Endothelial cell of umbilical vein (primary cell): ENCODE measurements at regions of chr12 and their contacts with region 1.

Region 1: DNA sequence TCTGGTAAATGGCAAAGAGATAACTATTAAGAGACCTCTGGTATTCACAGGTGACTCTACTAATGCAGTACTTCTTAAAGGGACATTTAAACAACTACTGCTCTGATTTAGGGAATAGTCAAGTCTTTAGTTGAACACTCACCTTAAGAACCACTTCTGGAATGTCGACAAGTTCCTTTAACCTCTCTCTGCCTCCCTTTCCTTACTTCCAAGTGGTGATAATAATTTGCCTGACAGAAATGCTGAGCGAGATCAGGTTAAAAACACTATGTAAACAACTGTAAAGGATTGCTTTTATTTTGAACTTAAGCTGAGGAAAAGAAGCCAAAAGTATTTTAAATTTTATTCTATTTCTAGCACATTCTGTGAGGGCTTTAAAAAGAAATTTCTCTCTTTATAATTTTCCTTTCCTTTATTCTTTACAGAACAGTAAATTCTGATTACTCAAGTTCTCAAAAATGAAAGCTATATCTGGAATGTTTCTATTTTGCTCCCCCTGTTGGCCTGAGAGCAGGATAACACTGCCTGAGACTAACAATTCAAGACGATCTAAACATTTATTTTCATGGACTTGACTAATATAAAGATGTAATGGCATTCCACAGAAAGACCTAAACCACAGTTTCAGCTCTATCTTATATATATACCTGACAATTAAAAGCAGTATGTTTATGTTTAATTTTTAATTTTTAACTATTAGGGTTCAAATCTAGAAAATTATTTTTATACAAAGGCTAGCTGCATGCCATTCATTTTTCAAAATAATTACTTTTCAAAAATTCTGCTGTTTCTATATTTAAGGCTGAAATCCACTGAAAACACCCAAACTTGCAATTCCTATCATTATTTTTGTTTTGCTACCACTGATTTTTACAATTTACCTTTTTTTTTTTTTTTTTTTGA is 29.2 kb downstream of the ZCCHC8 start:
- DNase-seq: peak; percentile 80
- H3K4me3 ChIP-seq: no peak overlapping the region
- H3K27ac ChIP-seq: peak overlapping the region; percentile 35
- H3K4me1 ChIP-seq: peaks cover 3% of the 10 kb centered on the region
- H3K27me3 ChIP-seq: no peaks in the 10 kb centered on the region
- CTCF ChIP-seq: peak; percentile 46 to 62
- POLR2A ChIP-seq: no peak

Region 2: DNA sequence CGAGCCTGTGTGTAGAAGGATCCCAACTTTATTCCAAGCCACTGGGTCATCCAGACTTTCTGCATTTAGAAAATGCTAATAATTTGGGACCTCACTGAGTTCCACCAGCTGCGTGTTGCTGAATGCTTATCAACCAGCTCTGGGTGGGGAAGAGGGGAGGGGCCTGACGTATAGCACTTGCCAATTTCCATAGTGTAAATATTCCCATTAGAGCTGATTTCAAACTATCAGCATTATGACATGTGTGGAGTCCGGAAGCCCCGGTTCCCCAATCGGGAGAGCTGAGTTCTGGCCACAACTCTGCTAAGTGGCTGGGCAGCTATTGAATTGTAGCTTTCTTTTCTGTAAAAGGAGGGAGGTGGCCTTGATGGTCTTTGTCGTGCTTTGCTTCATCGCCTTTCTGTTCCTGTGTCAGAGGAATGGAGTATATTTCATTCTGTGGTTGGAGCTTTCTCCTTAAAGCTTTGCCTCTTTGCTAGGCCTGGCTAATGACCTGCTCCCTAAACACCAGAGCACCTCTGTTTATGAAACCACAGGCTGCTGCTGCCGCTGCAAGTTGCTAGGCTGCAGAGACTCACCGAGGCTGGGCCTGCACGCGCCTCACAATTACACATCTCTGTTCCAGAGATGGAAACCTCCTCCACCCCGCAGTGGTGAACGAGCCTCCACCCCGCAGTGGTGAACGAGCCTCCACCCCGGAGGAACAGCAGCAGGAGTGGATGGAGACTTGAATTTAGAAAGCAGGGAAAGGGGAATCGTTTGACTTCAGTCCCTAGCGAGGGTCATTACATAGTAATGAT is 457.6 kb before region 1 on chr12:
- CTCF ChIA-PET with region 1: no interaction called
- POLR2A ChIA-PET with region 1: no interaction called
- dilution Hi-C with region 1: no loop called
- intact Hi-C with region 1: no loop called
- DNase-seq: no peak
- H3K4me3 ChIP-seq: no peak overlapping the region
- H3K27ac ChIP-seq: no peak overlapping the region
- H3K4me1 ChIP-seq: no peaks in the 10 kb centered on the region
- H3K27me3 ChIP-seq: no peaks in the 10 kb centered on the region
- CTCF ChIP-seq: no peak
- POLR2A ChIP-seq: no peak

Region 3: DNA sequence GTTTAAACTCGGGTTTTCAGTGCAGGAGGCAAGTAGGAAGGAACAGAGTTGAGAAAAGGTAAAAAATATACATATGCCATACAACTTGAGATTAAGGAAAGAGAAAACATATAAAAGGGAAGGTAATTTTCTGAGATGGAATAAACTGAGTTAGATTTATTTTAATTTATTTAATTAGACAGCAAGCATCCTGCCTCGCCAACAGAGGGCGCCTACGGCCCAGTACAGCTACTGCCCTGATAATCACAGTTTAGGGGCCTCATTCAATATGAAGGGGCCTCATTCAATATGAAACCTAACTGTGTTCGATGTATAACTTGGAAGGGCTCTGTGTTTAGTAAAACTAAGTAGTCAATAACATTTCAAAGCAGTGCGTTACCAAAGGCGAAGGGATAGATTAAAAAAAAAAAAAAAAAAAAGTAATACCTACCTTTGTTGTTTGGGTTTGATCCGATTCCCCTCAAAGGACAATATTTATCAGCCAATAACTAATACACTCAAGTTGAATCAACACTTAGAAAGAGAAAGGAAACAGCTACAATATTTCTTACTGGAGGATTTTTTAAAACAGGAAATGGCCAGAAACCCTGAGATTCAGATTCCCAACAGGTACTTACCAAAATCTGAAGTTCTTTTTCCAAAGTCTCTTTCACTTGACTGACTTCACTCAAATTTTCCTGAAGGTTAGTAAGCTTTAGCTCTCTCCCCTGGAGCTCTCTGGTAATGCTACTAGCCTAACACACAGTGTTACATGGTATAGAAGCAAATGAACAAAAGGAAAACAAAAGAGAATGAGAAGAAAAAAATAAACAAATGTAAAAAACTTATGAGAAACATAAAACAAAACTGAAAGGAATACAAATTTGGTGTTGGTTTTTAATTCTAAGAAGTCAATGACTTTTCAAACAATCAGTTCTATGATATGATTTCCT is 135.3 kb before region 1 on chr12:
- CTCF ChIA-PET with region 1: interaction called, 39 read pairs
- POLR2A ChIA-PET with region 1: no interaction called
- dilution Hi-C with region 1: no loop called
- intact Hi-C with region 1: loop called (anchors 2 kb)
- DNase-seq: peak; percentile 40
- H3K4me3 ChIP-seq: no peak overlapping the region
- H3K27ac ChIP-seq: no peak overlapping the region
- H3K4me1 ChIP-seq: no peaks in the 10 kb centered on the region
- H3K27me3 ChIP-seq: no peaks in the 10 kb centered on the region
- CTCF ChIP-seq: peak; percentile 55 to 71
- POLR2A ChIP-seq: no peak

Region 4: GRCh38 chr12:122387887-122388286 is 83.7 kb before region 1 on chr12:
- CTCF ChIA-PET with region 1: interaction called, 12 read pairs
- POLR2A ChIA-PET with region 1: no interaction called
- dilution Hi-C with region 1: no loop called
- intact Hi-C with region 1: no loop called
- DNase-seq: no peak
- H3K4me3 ChIP-seq: no peak overlapping the region
- H3K27ac ChIP-seq: no peak overlapping the region
- H3K4me1 ChIP-seq: no peaks in the 10 kb centered on the region
- H3K27me3 ChIP-seq: no peaks in the 10 kb centered on the region
- CTCF ChIP-seq: no peak
- POLR2A ChIP-seq: no peak

Region 5: GRCh38 chr12:122413516-122414404 is 57.8 kb before region 1 on chr12:
- CTCF ChIA-PET with region 1: interaction called, 26 read pairs
- POLR2A ChIA-PET with region 1: no interaction called
- dilution Hi-C with region 1: no loop called
- intact Hi-C with region 1: no loop called
- DNase-seq: peak; percentile 23
- H3K4me3 ChIP-seq: no peak overlapping the region
- H3K27ac ChIP-seq: no peak overlapping the region
- H3K4me1 ChIP-seq: peaks cover 29% of the 10 kb centered on the region
- H3K27me3 ChIP-seq: no peaks in the 10 kb centered on the region
- CTCF ChIP-seq: no peak
- POLR2A ChIP-seq: no peak

Region 6: DNA sequence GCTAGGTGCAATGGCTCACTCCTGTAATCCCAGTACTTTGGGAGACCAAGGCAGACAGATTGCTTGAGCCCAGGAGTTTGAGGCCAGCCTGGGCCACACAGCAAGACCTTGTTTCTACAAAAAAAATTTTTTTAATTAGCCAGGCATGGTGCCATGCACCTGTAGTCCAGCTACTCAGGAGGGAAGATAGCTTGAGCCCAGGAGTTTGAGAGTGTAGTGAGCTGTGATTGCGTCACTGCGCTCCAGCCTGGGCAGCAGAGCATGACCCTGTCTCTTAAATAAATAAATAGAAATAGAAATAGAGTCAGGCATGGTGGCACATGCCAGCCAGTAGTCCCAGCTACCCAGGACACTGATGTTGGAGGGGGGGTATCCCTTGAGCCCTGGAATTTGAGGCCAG is 12.4 kb before region 1 on chr12:
- CTCF ChIA-PET with region 1: interaction called, 16 read pairs
- POLR2A ChIA-PET with region 1: no interaction called
- dilution Hi-C with region 1: no loop called
- intact Hi-C with region 1: no loop called
- DNase-seq: no peak
- H3K4me3 ChIP-seq: no peak overlapping the region
- H3K27ac ChIP-seq: no peak overlapping the region
- H3K4me1 ChIP-seq: peaks cover 4% of the 10 kb centered on the region
- H3K27me3 ChIP-seq: no peaks in the 10 kb centered on the region
- CTCF ChIP-seq: no peak
- POLR2A ChIP-seq: no peak

Region 7: GRCh38 chr12:122500685-122501488 is 29.3 kb after region 1 on chr12 and contains the start of gene ZCCHC8:
- CTCF ChIA-PET with region 1: interaction called, 10 read pairs
- POLR2A ChIA-PET with region 1: no interaction called
- dilution Hi-C with region 1: no loop called
- intact Hi-C with region 1: no loop called
- DNase-seq: peak; percentile 98
- H3K4me3 ChIP-seq: peak within 1 kb of the TSS; percentile 60 to 99 (median 98)
- H3K27ac ChIP-seq: peak within 1 kb of the TSS; percentile 69
- H3K4me1 ChIP-seq: peaks cover 20% of the 10 kb centered on the region
- H3K27me3 ChIP-seq: no peaks in the 10 kb centered on the region
- CTCF ChIP-seq: no peak
- POLR2A ChIP-seq: peak; percentile 66
- total RNA-seq, gene ZCCHC8: 24.4 and 26.5 TPM in 2 replicates